BJ (cell line): ENCODE measurements at regions of chr9 and their contacts with region 1.

Region 1: GRCh38 chr9:131464354-131465000 is 38.2 kb upstream of the POMT1 start:
- DNase-seq: no peak
- H3K4me3 ChIP-seq: no peak overlapping the region
- H3K27me3 ChIP-seq: no peaks in the 10 kb centered on the region
- CTCF ChIP-seq: no peak

Region 2: GRCh38 chr9:131149688-131150053 is 314.8 kb before region 1 on chr9:
- CTCF ChIA-PET with region 1: no interaction called
- POLR2A ChIA-PET with region 1: interaction called, 15 read pairs
- DNase-seq: no peak
- H3K4me3 ChIP-seq: no peak overlapping the region
- H3K27me3 ChIP-seq: no peaks in the 10 kb centered on the region
- CTCF ChIP-seq: no peak

Region 3: GRCh38 chr9:131478421-131478868 is 14.0 kb after region 1 on chr9:
- CTCF ChIA-PET with region 1: interaction called, 10 read pairs
- POLR2A ChIA-PET with region 1: no interaction called
- DNase-seq: no peak
- H3K4me3 ChIP-seq: no peak overlapping the region
- H3K27me3 ChIP-seq: no peaks in the 10 kb centered on the region
- CTCF ChIP-seq: peak; percentile 70

Region 4: GRCh38 chr9:131685753-131686706 is 221.6 kb after region 1 on chr9:
- CTCF ChIA-PET with region 1: no interaction called
- POLR2A ChIA-PET with region 1: no interaction called
- DNase-seq: no peak
- H3K4me3 ChIP-seq: no peak overlapping the region
- H3K27me3 ChIP-seq: no peaks in the 10 kb centered on the region
- CTCF ChIP-seq: no peak